ENCODE measurements at regions of chr1 and their contacts with region 1.

Region 1: DNA sequence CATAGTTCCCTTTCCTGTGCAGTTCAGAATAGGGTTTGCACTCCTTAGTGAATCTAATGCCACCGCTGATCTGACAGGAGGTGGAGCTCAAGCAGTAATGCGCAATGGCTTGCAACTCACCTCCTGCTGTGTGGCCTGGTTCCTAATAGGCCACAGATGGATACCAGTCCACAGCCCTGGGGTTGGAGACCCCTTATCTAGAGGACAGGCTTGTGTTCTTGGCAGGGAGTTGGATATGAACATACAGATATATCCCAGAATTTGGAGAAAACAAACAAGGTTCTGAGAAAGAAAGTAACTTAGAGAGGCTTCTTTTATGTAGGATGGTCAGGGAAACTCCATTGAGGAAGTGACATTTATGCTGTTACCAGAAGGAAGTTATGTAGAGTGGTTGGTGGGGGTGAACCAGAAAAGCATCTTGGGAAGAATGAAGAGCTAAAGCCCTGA is 5.1 kb upstream of the PTPRC start:
- H3K4me3 Mint-ChIP-seq: peak overlapping the region; percentile 44
- H3K27ac Mint-ChIP-seq: peak overlapping the region; percentile 93
- H3K4me1 Mint-ChIP-seq: peaks cover 49% of the 10 kb centered on the region
- H3K27me3 Mint-ChIP-seq: no peaks in the 10 kb centered on the region

Region 2: GRCh38 chr1:198497346-198498102 is 136.2 kb before region 1 on chr1:
- intact Hi-C with region 1: loop called (anchors 5 kb)
- H3K4me3 Mint-ChIP-seq: peak overlapping the region; percentile 7
- H3K27ac Mint-ChIP-seq: peak overlapping the region; percentile 83
- H3K4me1 Mint-ChIP-seq: peaks cover 47% of the 10 kb centered on the region
- H3K27me3 Mint-ChIP-seq: no peaks in the 10 kb centered on the region

Region 3: GRCh38 chr1:198598796-198599321 is 34.8 kb before region 1 on chr1:
- intact Hi-C with region 1: loop called (anchors 5 kb)
- H3K4me3 Mint-ChIP-seq: no peak overlapping the region
- H3K27ac Mint-ChIP-seq: no peak overlapping the region
- H3K4me1 Mint-ChIP-seq: peaks cover 22% of the 10 kb centered on the region
- H3K27me3 Mint-ChIP-seq: no peaks in the 10 kb centered on the region